ENCODE measurements at regions of chr11 and their contacts with region 1.

Region 1: GRCh38 chr11:78228467-78228866 is 39.7 kb downstream of the USP35 start:
- DNase-seq: peak in 3 of 5 donors; percentile 31 to 88 (median 82)
- H3K4me3 ChIP-seq: no peak overlapping the region
- H3K27ac ChIP-seq: no peak overlapping the region
- H3K4me1 ChIP-seq: no peaks in the 10 kb centered on the region
- H3K27me3 ChIP-seq: no peaks in the 10 kb centered on the region
- CTCF ChIP-seq: peak; percentile 45

Region 2: DNA sequence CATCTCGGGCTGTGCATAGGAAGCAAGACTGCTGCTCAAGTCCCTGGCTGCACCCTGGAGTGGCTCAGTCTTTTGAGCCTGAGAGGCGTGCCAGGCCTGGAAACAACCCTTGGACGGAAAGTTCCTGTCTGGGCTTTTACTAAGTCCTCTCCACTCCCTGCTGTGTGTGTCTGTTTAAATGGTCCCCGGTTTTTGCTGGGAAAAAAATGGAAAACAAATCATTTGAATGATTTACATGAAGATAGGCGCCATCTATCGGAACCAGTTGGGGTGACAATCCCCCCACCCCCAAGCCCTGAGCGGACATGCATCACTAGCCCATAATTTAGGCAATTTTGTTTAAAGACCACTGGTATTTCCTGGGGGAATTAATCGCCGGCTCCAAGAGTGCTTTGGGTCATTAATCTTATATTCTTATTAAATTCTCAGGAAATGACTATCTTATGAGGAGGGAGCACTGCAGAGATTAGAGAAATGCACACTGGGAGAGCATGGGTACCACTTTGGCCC is 191.8 kb after region 1 on chr11:
- intact Hi-C with region 1: loop called (anchors 10 kb)
- DNase-seq: peak; percentile 81 to 93 (median 87)
- H3K4me3 ChIP-seq: peak overlapping the region in 1 of 3 donors; percentile 30
- H3K27ac ChIP-seq: peak overlapping the region; percentile 12 to 62
- H3K4me1 ChIP-seq: peaks cover 9 to 19% (median 19%) of the 10 kb centered on the region in 3 donors
- H3K27me3 ChIP-seq: no peaks in the 10 kb centered on the region
- CTCF ChIP-seq: peak; percentile 68

Region 3: GRCh38 chr11:78564490-78565467 is 336.3 kb after region 1 on chr11:
- intact Hi-C with region 1: loop called (anchors 10 kb)
- DNase-seq: peak in 3 of 5 donors; percentile 31 to 82 (median 69)
- H3K4me3 ChIP-seq: no peak overlapping the region
- H3K27ac ChIP-seq: no peak overlapping the region
- H3K4me1 ChIP-seq: peaks cover 4 to 12% (median 11%) of the 10 kb centered on the region in 3 donors
- H3K27me3 ChIP-seq: no peaks in the 10 kb centered on the region
- CTCF ChIP-seq: peak; percentile 65